Activated B cell treated with CpG ODN at 0.5 μM for 24 hours (primary cell): ENCODE measurements at regions of chr1 and their contacts with region 1.

Region 1: GRCh38 chr1:65059930-65060538 is 88.0 kb upstream of the AK4 start:
- DNase-seq: no peak
- ATAC-seq: peak; percentile 42
- H3K4me3 Mint-ChIP-seq: no peak overlapping the region
- H3K27ac Mint-ChIP-seq: peak overlapping the region; percentile 15
- H3K4me1 Mint-ChIP-seq: peaks cover 42% of the 10 kb centered on the region
- H3K27me3 Mint-ChIP-seq: no peaks in the 10 kb centered on the region
- CTCF ChIP-seq: no peak

Region 2: GRCh38 chr1:64923294-64923721 is 136.7 kb before region 1 on chr1:
- CTCF ChIA-PET with region 1: no interaction called
- POLR2A ChIA-PET with region 1: no interaction called
- intact Hi-C with region 1: no loop called
- DNase-seq: no peak
- ATAC-seq: no peak
- H3K4me3 Mint-ChIP-seq: peak overlapping the region; percentile 11
- H3K27ac Mint-ChIP-seq: peak overlapping the region; percentile 13
- H3K4me1 Mint-ChIP-seq: peaks cover 96% of the 10 kb centered on the region
- H3K27me3 Mint-ChIP-seq: no peaks in the 10 kb centered on the region
- CTCF ChIP-seq: no peak

Region 3: DNA sequence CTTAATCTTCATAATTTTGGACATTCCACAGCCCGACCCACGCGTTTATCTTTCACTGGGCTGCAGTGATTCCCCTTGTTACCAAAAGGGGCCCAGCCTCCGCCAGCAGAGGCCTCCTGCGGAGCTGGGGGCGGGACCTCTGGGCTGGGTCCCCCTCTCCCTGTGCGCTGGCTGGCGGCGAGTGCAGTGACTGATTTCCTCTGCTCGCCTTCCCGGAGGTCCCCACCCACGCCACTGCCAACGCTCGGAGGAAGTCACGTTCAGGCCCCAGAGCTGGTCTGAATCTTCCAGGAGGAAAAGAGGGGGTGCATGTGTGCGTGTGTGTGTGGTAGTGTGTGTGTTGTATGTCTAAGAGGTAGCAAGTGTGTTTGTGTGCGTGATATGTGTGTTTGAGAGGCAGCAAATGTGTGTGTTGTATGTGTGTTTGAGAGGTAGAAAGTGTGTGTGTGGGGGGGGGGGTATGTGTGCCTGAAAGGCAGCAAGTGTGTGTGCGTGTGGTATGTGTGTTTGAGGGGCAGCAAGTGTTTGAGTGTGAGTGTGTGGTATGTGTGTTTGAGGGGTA is 58.7 kb before region 1 on chr1:
- CTCF ChIA-PET with region 1: no interaction called
- POLR2A ChIA-PET with region 1: no interaction called
- intact Hi-C with region 1: no loop called
- DNase-seq: peak; percentile 65
- ATAC-seq: peak; percentile 81
- H3K4me3 Mint-ChIP-seq: peak overlapping the region; percentile 83
- H3K27ac Mint-ChIP-seq: peak overlapping the region; percentile 73
- H3K4me1 Mint-ChIP-seq: peaks cover 31% of the 10 kb centered on the region
- H3K27me3 Mint-ChIP-seq: no peaks in the 10 kb centered on the region
- CTCF ChIP-seq: no peak

Region 4: DNA sequence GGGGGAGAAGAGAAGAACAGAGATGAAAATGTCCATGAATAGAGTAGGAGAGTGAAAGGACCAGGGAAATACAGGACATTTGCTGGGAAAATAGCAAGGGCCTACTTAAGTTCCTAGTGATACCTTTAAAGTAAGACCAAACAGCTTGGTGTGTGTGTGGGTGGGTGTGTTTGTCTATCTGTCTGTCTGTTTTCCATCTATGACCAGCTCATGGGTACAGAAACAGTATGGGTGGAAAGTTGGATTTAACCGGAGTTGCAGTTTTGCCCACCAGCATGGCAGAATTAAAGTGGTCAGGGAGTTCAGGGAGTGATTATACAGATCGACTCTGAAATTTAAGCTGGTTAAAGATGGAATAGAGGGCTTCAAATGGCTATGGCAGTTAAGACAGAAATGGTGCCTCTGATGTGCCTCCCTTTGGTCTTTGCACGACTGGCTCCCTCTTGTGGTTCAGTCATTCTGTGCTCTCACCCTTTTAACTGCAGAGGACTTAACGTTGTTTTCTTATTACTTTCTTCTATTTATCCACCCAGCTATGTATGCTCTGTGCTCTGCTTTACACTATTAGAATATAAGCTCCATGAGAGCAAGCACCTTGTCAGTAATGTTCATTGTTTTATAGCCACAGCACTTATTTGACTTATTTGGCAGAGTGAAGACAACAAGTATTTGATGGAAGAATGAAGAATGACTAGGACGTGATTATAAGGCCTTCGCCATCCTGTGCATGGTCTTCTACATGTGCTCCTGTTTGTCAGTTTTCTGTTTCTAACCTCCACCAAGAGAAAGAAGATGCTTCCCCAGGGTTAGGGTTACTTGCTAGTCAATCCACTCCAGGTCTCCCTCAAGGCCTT is 15.3 kb after region 1 on chr1:
- CTCF ChIA-PET with region 1: interaction called, 137 read pairs
- POLR2A ChIA-PET with region 1: interaction called, 8 read pairs
- intact Hi-C with region 1: loop called (anchors 1 kb)
- DNase-seq: no peak
- ATAC-seq: peak; percentile 94
- H3K4me3 Mint-ChIP-seq: no peak overlapping the region
- H3K27ac Mint-ChIP-seq: no peak overlapping the region
- H3K4me1 Mint-ChIP-seq: no peaks in the 10 kb centered on the region
- H3K27me3 Mint-ChIP-seq: peaks cover 5% of the 10 kb centered on the region
- CTCF ChIP-seq: peak; percentile 51

Region 5: GRCh38 chr1:65090403-65090802 is 30.4 kb after region 1 on chr1:
- CTCF ChIA-PET with region 1: no interaction called
- POLR2A ChIA-PET with region 1: no interaction called
- intact Hi-C with region 1: no loop called
- DNase-seq: no peak
- ATAC-seq: no peak
- H3K4me3 Mint-ChIP-seq: no peak overlapping the region
- H3K27ac Mint-ChIP-seq: no peak overlapping the region
- H3K4me1 Mint-ChIP-seq: no peaks in the 10 kb centered on the region
- H3K27me3 Mint-ChIP-seq: peaks cover 13% of the 10 kb centered on the region
- CTCF ChIP-seq: no peak

Region 6: GRCh38 chr1:65148548-65149350 is 88.7 kb after region 1 on chr1:
- CTCF ChIA-PET with region 1: no interaction called
- POLR2A ChIA-PET with region 1: no interaction called
- intact Hi-C with region 1: loop called (anchors 5 kb)
- DNase-seq: peak; percentile 30
- ATAC-seq: peak; percentile 32
- H3K4me3 Mint-ChIP-seq: peak overlapping the region; percentile 76
- H3K27ac Mint-ChIP-seq: no peak overlapping the region
- H3K4me1 Mint-ChIP-seq: peaks cover 11% of the 10 kb centered on the region
- H3K27me3 Mint-ChIP-seq: peaks cover 42% of the 10 kb centered on the region
- CTCF ChIP-seq: no peak

Region 7: DNA sequence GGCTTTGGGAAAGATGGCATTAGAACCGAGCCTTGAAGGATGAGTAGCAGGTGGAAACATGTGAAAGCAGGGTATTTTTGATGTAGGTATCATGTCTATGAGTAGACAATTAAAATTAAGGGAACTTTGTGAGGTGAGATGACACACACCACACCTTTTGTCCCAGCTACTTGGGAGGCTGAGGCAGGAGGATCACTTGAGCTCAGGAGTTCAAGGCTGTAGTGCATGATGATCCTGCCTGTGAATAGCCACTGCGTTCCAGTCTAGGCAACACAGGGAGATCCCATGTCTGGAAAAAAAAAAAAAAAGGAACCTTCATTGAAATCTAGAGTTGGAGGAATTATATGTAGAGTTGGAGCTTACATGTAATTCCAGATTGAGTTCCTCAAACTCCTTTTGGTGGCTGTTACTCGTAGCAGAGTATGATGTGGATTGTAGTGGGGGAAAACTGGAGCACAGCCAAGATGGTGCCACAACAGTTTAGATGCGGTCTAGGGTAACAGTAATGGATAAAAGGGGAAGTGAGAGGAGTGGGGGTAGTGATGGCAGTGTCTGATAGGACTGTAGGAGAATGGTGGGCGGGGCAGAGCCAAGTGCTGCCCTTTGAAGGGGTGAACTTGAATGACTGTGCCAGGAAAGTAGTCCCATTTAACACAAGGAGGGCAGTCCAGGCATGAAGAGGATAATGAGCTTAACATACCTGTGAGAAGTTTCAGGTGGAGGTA is 105.4 kb after region 1 on chr1:
- CTCF ChIA-PET with region 1: no interaction called
- POLR2A ChIA-PET with region 1: no interaction called
- intact Hi-C with region 1: no loop called
- DNase-seq: no peak
- ATAC-seq: peak; percentile 42
- H3K4me3 Mint-ChIP-seq: no peak overlapping the region
- H3K27ac Mint-ChIP-seq: no peak overlapping the region
- H3K4me1 Mint-ChIP-seq: no peaks in the 10 kb centered on the region
- H3K27me3 Mint-ChIP-seq: peaks cover 2% of the 10 kb centered on the region
- CTCF ChIP-seq: no peak

Region 8: GRCh38 chr1:65209005-65209885 is 149.2 kb after region 1 on chr1:
- CTCF ChIA-PET with region 1: interaction called, 5 read pairs
- POLR2A ChIA-PET with region 1: no interaction called
- intact Hi-C with region 1: loop called (anchors 1 kb)
- DNase-seq: no peak
- ATAC-seq: no peak
- H3K4me3 Mint-ChIP-seq: no peak overlapping the region
- H3K27ac Mint-ChIP-seq: no peak overlapping the region
- H3K4me1 Mint-ChIP-seq: peaks cover 5% of the 10 kb centered on the region
- H3K27me3 Mint-ChIP-seq: no peaks in the 10 kb centered on the region
- CTCF ChIP-seq: no peak